Endothelial cell of umbilical vein (primary cell): ENCODE measurements at regions of chr14 and their contacts with region 1.

Region 1: GRCh38 chr14:61461808-61462275 is 140.5 kb downstream of the PRKCH start:
- DNase-seq: peak; percentile 80
- H3K4me3 ChIP-seq: no peak overlapping the region
- H3K27ac ChIP-seq: no peak overlapping the region
- H3K4me1 ChIP-seq: peaks cover 26% of the 10 kb centered on the region
- H3K27me3 ChIP-seq: no peaks in the 10 kb centered on the region
- CTCF ChIP-seq: peak; percentile 35 to 43
- POLR2A ChIP-seq: no peak

Region 2: GRCh38 chr14:61438860-61439684 is 22.8 kb before region 1 on chr14:
- CTCF ChIA-PET with region 1: no interaction called
- POLR2A ChIA-PET with region 1: no interaction called
- dilution Hi-C with region 1: no loop called
- intact Hi-C with region 1: no loop called
- DNase-seq: peak; percentile 91
- H3K4me3 ChIP-seq: peak overlapping the region in 1 of 3 experiments; percentile 0
- H3K27ac ChIP-seq: peak overlapping the region; percentile 39
- H3K4me1 ChIP-seq: peaks cover 43% of the 10 kb centered on the region
- H3K27me3 ChIP-seq: no peaks in the 10 kb centered on the region
- CTCF ChIP-seq: no peak
- POLR2A ChIP-seq: peak; percentile 25

Region 3: DNA sequence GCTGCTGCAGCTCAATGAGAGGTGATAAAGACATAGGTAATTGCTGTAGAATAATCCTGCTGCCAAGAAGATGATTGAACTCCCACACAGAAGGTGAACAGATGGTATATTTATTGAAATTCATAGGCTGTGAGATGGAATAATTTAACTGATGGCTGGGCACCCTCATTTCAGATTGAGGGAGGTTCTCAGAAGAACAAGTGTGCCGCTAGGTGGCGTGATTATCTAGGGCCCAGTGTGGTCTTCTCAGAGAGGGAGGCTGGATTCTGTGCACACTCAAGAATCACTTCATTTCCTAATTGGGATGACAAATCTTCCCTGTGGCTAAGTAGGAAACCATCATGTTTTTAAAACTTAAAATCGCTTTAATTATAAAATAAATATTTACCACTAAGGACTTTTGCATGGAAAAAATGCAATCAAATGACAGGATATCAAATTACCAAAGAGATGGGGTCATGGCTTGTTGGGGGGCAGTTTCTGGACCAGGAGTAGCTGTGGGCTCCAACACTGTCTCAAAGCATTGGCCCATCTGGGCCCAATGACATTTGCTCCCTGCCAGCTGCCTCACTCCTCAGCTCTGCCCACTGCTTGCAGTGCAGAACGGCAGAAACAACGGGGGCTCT is 432.7 kb after region 1 on chr14:
- CTCF ChIA-PET with region 1: no interaction called
- POLR2A ChIA-PET with region 1: no interaction called
- dilution Hi-C with region 1: no loop called
- intact Hi-C with region 1: loop called (anchors 5 kb)
- DNase-seq: peak; percentile 51
- H3K4me3 ChIP-seq: no peak overlapping the region
- H3K27ac ChIP-seq: no peak overlapping the region
- H3K4me1 ChIP-seq: no peaks in the 10 kb centered on the region
- H3K27me3 ChIP-seq: peaks cover 2 to 18% of the 10 kb centered on the region in 2 experiments
- CTCF ChIP-seq: peak; percentile 70 to 74
- POLR2A ChIP-seq: no peak